ENCODE measurements at regions of chr17 and their contacts with region 1.

Region 1: DNA sequence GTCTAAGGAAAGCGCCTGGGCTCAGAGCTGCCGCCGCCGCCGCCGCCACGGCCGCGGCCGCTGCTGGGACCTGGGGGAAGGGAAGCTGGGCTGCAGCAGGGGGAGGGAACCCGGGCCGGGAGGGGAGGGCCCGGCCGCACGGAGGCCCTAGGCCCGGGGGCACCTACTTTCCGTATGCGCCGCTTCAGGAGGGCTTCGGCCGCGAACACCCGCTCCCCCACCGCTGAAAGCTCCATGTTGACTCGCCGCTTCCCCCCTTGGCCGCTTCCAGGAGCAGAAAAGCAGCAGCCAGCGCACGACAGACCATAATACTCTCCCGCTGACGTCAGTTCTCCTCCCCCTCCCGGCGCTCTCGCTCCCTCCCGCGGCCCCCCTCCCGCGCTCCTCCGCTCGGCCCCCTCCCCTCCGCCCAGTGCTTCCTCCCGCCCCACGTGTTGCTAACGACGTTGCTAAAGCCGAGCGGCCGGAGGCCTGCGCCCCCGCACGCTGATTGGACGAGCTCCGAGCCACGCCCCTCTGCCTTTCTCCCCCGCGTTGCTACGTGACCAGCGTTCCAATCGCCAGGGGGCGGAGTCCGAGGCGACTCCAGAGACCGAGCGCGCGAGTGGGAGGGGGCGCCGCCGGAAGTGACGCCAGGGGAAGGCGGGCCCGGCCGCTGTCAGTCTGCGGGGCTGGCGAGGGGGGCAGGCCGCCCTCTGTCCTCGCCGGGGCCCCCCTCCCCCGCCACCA is at the start of gene CBX8:
- DNase-seq: peak; percentile 100
- H3K4me3 ChIP-seq: peak within 1 kb of the TSS; percentile 87
- H3K27ac ChIP-seq: peak within 1 kb of the TSS; percentile 53
- H3K4me1 ChIP-seq: peaks cover 49% of the 10 kb centered on the region
- CTCF ChIP-seq: no peak
- total RNA-seq, gene CBX8: 7.5 and 11.7 TPM in 2 replicates

Region 2: GRCh38 chr17:79777894-79778503 is 18.9 kb before region 1 on chr17 and contains the start of gene CBX2:
- CTCF ChIA-PET with region 1: no interaction called
- POLR2A ChIA-PET with region 1: interaction called, 3 read pairs
- intact Hi-C with region 1: loop called (anchors 2 kb)
- DNase-seq: peak; percentile 88
- H3K4me3 ChIP-seq: peak within 1 kb of the TSS; percentile 95
- H3K27ac ChIP-seq: peak within 1 kb of the TSS; percentile 28
- H3K4me1 ChIP-seq: peaks cover 37% of the 10 kb centered on the region
- CTCF ChIP-seq: no peak
- total RNA-seq, gene CBX2: 29.9 and 31.5 TPM in 2 replicates

Region 3: DNA sequence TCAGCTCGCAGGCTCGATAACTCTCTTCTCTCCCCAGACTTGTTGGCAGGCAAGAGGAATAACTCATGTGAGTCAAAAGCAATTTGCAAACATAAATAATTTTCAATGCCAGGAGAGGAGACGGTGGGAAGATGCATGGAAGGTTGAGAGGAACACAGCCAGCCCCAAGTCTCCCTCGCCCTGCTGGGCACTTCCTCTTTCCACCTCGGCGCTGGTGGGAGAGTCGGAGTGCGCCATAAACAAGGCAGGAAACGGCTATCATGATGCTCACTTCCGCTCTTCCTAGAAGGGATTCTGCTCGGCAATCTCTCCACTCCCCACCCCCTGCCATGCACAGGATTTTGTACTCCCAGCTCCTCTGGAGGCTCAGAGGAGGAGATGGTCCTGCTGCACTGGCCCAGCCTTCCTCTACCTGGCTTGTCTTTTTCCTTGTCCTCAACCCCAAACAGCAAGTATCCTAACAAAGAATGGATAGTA is 29.3 kb after region 1 on chr17:
- CTCF ChIA-PET with region 1: no interaction called
- POLR2A ChIA-PET with region 1: no interaction called
- intact Hi-C with region 1: no loop called
- DNase-seq: peak; percentile 64
- H3K4me3 ChIP-seq: no peak overlapping the region
- H3K27ac ChIP-seq: no peak overlapping the region
- H3K4me1 ChIP-seq: peaks cover 16% of the 10 kb centered on the region
- CTCF ChIP-seq: no peak

Region 4: GRCh38 chr17:79839363-79840268 is 42.7 kb after region 1 on chr17 and contains the start of gene CBX4:
- CTCF ChIA-PET with region 1: interaction called, 4 read pairs
- POLR2A ChIA-PET with region 1: interaction called, 9 read pairs
- intact Hi-C with region 1: loop called (anchors 1 kb)
- DNase-seq: peak; percentile 98
- H3K4me3 ChIP-seq: peak within 1 kb of the TSS; percentile 84
- H3K27ac ChIP-seq: peak within 1 kb of the TSS; percentile 91
- H3K4me1 ChIP-seq: peaks cover 24% of the 10 kb centered on the region
- CTCF ChIP-seq: peak; percentile 78
- total RNA-seq, gene CBX4: 98.9 and 109 TPM in 2 replicates

Region 5: GRCh38 chr17:80263253-80264204 is 466.6 kb after region 1 on chr17:
- CTCF ChIA-PET with region 1: no interaction called
- POLR2A ChIA-PET with region 1: no interaction called
- intact Hi-C with region 1: loop called (anchors 5 kb)
- DNase-seq: peak; percentile 97
- H3K4me3 ChIP-seq: peak overlapping the region; percentile 53
- H3K27ac ChIP-seq: peak overlapping the region; percentile 81
- H3K4me1 ChIP-seq: peaks cover 50% of the 10 kb centered on the region
- CTCF ChIP-seq: peak; percentile 45; the same call in 1 of the 2 replicates

Measured in OCI-LY7 (cell line).